ENCODE measurements at regions of chr6 and their contacts with region 1.

Region 1: GRCh38 chr6:391559-392440 is at the start of gene IRF4:
- DNase-seq: no peak
- ATAC-seq: peak; percentile 74
- H3K4me3 Mint-ChIP-seq: peak within 1 kb of the TSS; percentile 98
- H3K27ac Mint-ChIP-seq: peak within 1 kb of the TSS; percentile 94
- H3K4me1 Mint-ChIP-seq: peaks cover 51% of the 10 kb centered on the region
- H3K27me3 Mint-ChIP-seq: no peaks in the 10 kb centered on the region
- CTCF ChIP-seq: no peak
- total RNA-seq, gene IRF4: 417 and 426 TPM in 2 replicates

Region 2: GRCh38 chr6:286681-287488 is 104.9 kb before region 1 on chr6:
- CTCF ChIA-PET with region 1: interaction called, 5 read pairs
- POLR2A ChIA-PET with region 1: interaction called, 152 read pairs
- intact Hi-C with region 1: loop called (anchors 1 kb)
- DNase-seq: peak; percentile 54
- ATAC-seq: peak; percentile 47
- H3K4me3 Mint-ChIP-seq: peak overlapping the region; percentile 76
- H3K27ac Mint-ChIP-seq: peak overlapping the region; percentile 93
- H3K4me1 Mint-ChIP-seq: peaks cover 65% of the 10 kb centered on the region
- H3K27me3 Mint-ChIP-seq: no peaks in the 10 kb centered on the region
- CTCF ChIP-seq: no peak

Region 3: GRCh38 chr6:319177-320131 is 72.3 kb before region 1 on chr6:
- CTCF ChIA-PET with region 1: interaction called, 3 read pairs
- POLR2A ChIA-PET with region 1: interaction called, 37 read pairs
- intact Hi-C with region 1: no loop called
- DNase-seq: peak; percentile 7
- ATAC-seq: peak; percentile 58
- H3K4me3 Mint-ChIP-seq: peak overlapping the region; percentile 29
- H3K27ac Mint-ChIP-seq: peak overlapping the region; percentile 28
- H3K4me1 Mint-ChIP-seq: peaks cover 46% of the 10 kb centered on the region
- H3K27me3 Mint-ChIP-seq: no peaks in the 10 kb centered on the region
- CTCF ChIP-seq: no peak

Region 4: GRCh38 chr6:356828-357251 is 35.0 kb before region 1 on chr6:
- CTCF ChIA-PET with region 1: no interaction called
- POLR2A ChIA-PET with region 1: interaction called, 31 read pairs
- intact Hi-C with region 1: no loop called
- DNase-seq: no peak
- ATAC-seq: peak; percentile 85
- H3K4me3 Mint-ChIP-seq: peak overlapping the region; percentile 68
- H3K27ac Mint-ChIP-seq: peak overlapping the region; percentile 93
- H3K4me1 Mint-ChIP-seq: peaks cover 73% of the 10 kb centered on the region
- H3K27me3 Mint-ChIP-seq: no peaks in the 10 kb centered on the region
- CTCF ChIP-seq: no peak

Region 5: DNA sequence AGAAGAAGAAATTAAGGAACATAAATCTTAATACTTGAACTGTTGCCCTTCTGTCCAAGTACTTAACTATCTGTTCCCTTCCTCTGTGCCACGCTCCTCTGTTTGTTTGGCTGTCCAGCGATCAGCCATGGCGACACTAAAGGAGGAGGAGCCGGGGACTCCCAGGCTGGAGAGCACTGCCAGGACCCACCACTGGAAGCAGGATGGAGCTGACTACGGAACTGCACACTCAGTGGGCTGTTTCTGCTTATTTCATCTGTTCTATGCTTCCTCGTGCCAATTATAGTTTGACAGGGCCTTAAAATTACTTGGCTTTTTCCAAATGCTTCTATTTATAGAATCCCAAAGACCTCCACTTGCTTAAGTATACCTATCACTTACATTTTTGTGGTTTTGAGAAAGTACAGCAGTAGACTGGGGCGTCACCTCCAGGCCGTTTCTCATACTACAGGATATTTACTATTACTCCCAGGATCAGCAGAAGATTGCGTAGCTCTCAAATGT is 16.9 kb after region 1 on chr6:
- CTCF ChIA-PET with region 1: interaction called, 14 read pairs
- POLR2A ChIA-PET with region 1: interaction called, 255 read pairs
- intact Hi-C with region 1: loop called (anchors 1 kb)
- DNase-seq: no peak
- ATAC-seq: no peak
- H3K4me3 Mint-ChIP-seq: peak overlapping the region; percentile 15
- H3K27ac Mint-ChIP-seq: peak overlapping the region; percentile 60
- H3K4me1 Mint-ChIP-seq: peaks cover 56% of the 10 kb centered on the region
- H3K27me3 Mint-ChIP-seq: no peaks in the 10 kb centered on the region
- CTCF ChIP-seq: no peak

Region 6: DNA sequence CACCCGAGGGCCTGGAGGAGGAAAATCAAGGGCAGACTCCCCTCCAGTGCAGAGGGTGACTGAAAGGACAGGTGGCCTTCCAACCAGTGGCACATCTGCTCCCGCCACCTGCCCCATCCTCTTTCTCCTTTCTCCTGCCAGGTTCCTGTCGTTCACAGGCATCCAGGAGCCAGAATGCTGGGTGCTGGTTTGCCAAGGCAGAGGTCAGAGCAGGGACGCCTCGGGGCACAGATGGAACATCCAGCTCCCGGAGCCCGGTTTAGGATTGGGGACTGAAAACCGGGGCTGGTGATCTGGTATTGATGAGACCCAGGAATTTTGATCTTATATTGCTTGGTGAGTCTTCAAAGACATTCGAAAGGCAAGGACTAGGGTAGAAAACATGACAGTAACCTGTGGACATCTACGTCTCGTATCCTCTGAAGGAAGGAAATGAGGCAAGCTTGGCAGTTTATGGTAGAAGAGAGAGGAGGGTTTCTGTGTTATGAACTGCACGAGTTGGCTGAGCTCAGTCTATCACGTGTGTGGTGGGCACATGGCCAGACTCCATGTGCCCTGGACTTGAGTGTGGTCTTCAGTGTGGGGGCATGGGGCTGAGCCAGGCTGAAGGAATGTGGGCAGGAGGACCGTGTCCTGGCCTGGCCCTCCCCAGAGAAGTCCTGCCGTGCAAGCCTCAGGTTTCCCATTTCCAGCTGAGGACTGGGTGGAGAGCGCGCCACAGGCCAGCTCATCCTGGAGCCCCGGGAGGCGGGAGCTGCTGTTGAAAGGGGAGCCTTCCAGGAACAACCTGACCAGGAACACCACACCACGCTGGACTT is 73.9 kb after region 1 on chr6:
- CTCF ChIA-PET with region 1: no interaction called
- POLR2A ChIA-PET with region 1: no interaction called
- intact Hi-C with region 1: no loop called
- DNase-seq: no peak
- ATAC-seq: no peak
- H3K4me3 Mint-ChIP-seq: no peak overlapping the region
- H3K27ac Mint-ChIP-seq: no peak overlapping the region
- H3K4me1 Mint-ChIP-seq: peaks cover 11% of the 10 kb centered on the region
- H3K27me3 Mint-ChIP-seq: peaks cover 16% of the 10 kb centered on the region
- CTCF ChIP-seq: no peak

Region 7: GRCh38 chr6:498795-499231 is 107.0 kb after region 1 on chr6:
- CTCF ChIA-PET with region 1: no interaction called
- POLR2A ChIA-PET with region 1: interaction called, 9 read pairs
- intact Hi-C with region 1: loop called (anchors 5 kb)
- DNase-seq: no peak
- ATAC-seq: peak; percentile 18
- H3K4me3 Mint-ChIP-seq: no peak overlapping the region
- H3K27ac Mint-ChIP-seq: peak overlapping the region; percentile 18
- H3K4me1 Mint-ChIP-seq: peaks cover 40% of the 10 kb centered on the region
- H3K27me3 Mint-ChIP-seq: no peaks in the 10 kb centered on the region
- CTCF ChIP-seq: no peak

Region 8: DNA sequence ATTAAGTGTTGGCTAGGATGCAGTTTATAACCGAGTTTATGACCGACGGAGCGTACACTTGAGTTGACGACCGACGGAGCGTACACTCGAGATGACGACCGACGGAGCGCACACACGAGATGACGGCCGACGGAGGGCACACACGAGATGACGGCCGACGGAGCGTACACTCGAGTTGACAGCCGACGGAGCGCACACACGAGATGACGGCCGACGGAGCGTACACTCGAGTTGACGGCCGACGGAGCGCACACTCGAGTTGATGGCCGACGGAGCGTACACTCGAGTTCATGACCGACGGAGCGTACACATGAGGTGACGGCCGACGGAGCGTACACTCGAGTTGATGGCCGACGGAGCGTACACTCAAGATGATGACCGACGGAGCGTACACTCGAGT is 145.3 kb after region 1 on chr6:
- CTCF ChIA-PET with region 1: no interaction called
- POLR2A ChIA-PET with region 1: no interaction called
- intact Hi-C with region 1: no loop called
- DNase-seq: no peak
- ATAC-seq: no peak
- H3K4me3 Mint-ChIP-seq: no peak overlapping the region
- H3K27ac Mint-ChIP-seq: no peak overlapping the region
- H3K4me1 Mint-ChIP-seq: peaks cover 4% of the 10 kb centered on the region
- H3K27me3 Mint-ChIP-seq: no peaks in the 10 kb centered on the region
- CTCF ChIP-seq: no peak

Measured in activated B cell treated with CpG ODN at 0.5 μM for 24 hours (primary cell).